Heart left ventricle (tissue), 16 donors: ENCODE measurements at regions of chr7 and their contacts with region 1.

Region 1: DNA sequence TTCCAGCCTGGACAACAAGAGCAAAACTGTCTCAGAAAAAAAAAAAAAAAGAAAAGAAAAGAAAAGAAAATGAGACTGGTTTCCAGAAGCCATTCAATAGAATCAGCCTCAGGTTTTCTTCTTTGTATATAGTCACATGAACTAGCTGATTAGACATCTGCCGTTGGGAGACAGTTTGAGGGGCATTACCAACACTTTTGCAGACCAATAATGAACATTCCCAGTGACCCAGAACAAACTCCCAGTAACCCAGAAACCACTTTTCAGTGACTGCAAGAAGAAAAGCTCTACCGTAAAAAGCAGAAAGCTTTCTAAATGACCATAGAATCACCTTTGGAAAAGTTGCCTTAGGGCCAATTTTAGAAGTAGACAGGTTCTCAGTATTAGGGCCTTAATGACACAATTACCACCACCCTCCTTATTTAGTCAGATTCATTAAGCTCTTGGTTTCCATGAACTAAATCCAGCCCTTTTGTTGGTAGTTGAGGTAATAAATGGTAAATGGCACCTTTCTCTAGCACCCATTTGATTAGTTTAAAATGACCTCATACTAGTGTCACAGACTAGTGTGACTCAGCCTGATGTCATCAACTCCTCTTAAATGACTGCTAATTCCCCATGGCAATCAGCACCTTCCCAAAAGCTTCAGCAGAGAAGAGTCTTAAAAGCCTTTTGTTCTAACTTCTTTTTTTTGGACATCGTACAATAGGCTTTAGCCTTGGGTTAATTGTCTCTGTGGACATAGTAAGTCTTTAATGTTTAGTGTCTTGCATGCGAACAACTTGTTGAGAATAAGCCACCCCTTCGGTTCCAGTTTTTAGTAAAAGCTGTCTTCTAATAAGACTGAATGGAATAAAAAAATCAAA is 33.6 kb upstream of the XRCC2 start:
- DNase-seq: no peak
- ATAC-seq: no peak
- H3K4me3 ChIP-seq: no peak overlapping the region
- H3K27ac ChIP-seq: no peak overlapping the region
- H3K4me1 ChIP-seq: peaks cover 0 to 6% (median 0%) of the 10 kb centered on the region in 12 donors
- H3K27me3 ChIP-seq: no peaks in the 10 kb centered on the region
- CTCF ChIP-seq: no peak
- POLR2A ChIP-seq: no peak

Region 2: GRCh38 chr7:151744656-151745638 is 964.6 kb before region 1 on chr7:
- intact Hi-C with region 1: no loop called
- DNase-seq: peak; percentile 53 to 89 (median 81)
- ATAC-seq: peak; percentile 68 to 93 (median 88)
- H3K4me3 ChIP-seq: peak overlapping the region in 1 of 12 donors; percentile 1
- H3K27ac ChIP-seq: peak overlapping the region; percentile 61 to 86 (median 82)
- H3K4me1 ChIP-seq: peaks cover 4 to 41% (median 29%) of the 10 kb centered on the region in 12 donors
- H3K27me3 ChIP-seq: no peaks in the 10 kb centered on the region
- CTCF ChIP-seq: peak in 9 of 12 donors; percentile 16 to 50 (median 26)
- POLR2A ChIP-seq: no peak

Region 3: DNA sequence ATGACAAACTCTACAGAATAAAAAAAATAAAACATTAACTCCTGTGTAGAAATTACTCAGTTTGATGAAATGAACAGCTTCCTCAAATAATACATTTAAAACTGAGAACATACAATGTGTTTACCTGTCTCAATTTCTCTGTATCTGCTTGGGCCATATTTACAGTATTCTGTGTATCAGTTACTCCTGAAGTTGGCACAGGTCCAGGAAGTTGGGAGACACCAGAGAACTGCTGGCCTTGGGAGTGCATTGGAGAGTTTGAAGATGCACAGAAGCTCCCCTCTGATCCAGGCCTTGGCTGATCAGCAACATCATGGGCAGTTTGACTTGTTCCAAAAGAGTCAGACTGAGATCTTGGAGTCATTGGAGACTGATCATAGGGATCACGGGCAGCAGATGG is 528.9 kb before region 1 on chr7:
- intact Hi-C with region 1: loop called in 1 of 10 experiments (anchors 10 kb)
- DNase-seq: no peak
- ATAC-seq: no peak
- H3K4me3 ChIP-seq: no peak overlapping the region
- H3K27ac ChIP-seq: no peak overlapping the region
- H3K4me1 ChIP-seq: peaks cover 0 to 11% (median 0%) of the 10 kb centered on the region in 12 donors
- H3K27me3 ChIP-seq: no peaks in the 10 kb centered on the region
- CTCF ChIP-seq: no peak
- POLR2A ChIP-seq: no peak

Region 4: DNA sequence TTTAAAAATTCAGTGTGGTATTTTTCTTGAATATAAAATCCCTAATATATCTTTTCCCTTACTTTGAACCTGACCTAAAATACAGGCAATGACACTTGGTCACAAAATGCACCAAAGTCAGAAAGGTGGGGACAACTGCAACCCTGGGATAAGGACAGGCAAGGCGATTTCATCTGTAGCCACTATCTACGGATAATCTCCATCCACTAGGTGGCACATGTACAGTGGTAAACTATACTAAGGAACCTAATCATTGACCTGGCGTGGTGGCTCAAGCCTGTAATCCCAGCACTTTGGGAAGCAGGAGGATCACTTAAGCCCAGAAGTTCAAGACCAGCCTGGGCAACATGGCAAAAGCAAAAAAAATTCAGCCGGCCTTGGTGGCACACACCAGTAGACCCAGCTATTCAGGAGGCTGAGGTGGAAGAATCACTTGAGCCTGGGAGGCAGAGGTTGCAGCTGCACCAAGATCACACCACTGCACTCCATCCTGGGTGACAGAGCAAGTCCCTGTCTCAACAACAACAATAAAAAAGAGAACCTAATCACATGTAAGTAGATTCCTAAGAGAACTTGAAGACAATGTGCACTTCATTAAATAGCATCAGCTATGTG is 372.7 kb before region 1 on chr7:
- intact Hi-C with region 1: loop called in 6 of 10 experiments (anchors 5 to 10 kb)
- DNase-seq: no peak
- ATAC-seq: peak in 3 of 4 donors; percentile 64 to 71 (median 70)
- H3K4me3 ChIP-seq: peak overlapping the region in 2 of 12 donors; percentile 38 to 44
- H3K27ac ChIP-seq: peak overlapping the region in 2 of 12 donors; percentile 41 to 61
- H3K4me1 ChIP-seq: peaks cover 4 to 69% (median 46%) of the 10 kb centered on the region in 12 donors
- H3K27me3 ChIP-seq: no peaks in the 10 kb centered on the region
- CTCF ChIP-seq: peak in 11 of 12 donors; percentile 37 to 58 (median 47)
- POLR2A ChIP-seq: no peak

Region 5: DNA sequence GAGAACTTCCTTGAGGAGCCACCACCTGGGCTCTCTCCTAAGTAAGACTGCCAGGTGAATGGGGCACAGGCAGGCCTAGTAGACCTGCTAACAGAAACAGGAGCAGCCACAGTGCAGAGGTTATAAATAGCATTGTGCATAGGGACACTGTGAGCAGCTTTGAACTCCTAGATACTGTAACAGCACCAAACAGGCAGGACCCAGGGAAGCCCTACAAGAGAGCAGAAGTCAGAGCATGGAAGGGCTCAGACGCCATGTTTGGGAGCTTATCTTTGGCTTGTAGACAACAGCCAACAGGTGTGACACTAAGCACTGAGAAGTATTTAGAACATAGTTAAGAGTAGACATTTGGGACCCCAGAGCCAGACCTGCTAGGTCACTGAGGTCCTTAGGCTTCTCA is 48.0 kb before region 1 on chr7:
- intact Hi-C with region 1: no loop called
- DNase-seq: peak in 1 of 5 donors; percentile 32
- ATAC-seq: peak; percentile 95 to 98 (median 97)
- H3K4me3 ChIP-seq: no peak overlapping the region
- H3K27ac ChIP-seq: peak overlapping the region in 6 of 12 donors; percentile 24 to 56 (median 42)
- H3K4me1 ChIP-seq: peaks cover 0 to 7% (median 0%) of the 10 kb centered on the region in 12 donors
- H3K27me3 ChIP-seq: no peaks in the 10 kb centered on the region
- CTCF ChIP-seq: no peak
- POLR2A ChIP-seq: no peak

Region 6: DNA sequence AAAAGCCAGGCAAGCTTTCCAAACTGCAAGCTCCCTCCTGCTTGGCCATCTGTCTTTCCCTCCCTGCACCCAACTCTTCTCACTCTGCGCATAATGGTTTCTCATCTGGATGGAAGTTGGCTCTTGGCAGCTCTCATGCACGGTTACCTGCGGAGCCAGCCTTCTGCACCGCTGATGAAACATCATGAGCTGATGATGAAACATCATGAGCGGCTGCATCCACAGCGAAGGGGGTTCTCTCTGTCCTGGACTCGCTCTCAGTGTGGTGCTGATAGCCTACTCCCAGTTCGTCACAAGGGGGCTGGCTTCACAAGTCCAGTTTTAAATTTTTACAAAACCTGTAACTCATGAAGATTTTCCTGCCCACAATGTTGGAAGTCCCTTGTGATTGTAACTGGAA is 507.5 kb after region 1 on chr7:
- intact Hi-C with region 1: no loop called
- DNase-seq: no peak
- ATAC-seq: no peak
- H3K4me3 ChIP-seq: no peak overlapping the region
- H3K27ac ChIP-seq: no peak overlapping the region
- H3K4me1 ChIP-seq: no peaks in the 10 kb centered on the region
- H3K27me3 ChIP-seq: peaks cover 0 to 3% (median 0%) of the 10 kb centered on the region in 9 donors
- CTCF ChIP-seq: no peak
- POLR2A ChIP-seq: no peak